AG04450 (cell line): ENCODE measurements at regions of chr14 and their contacts with region 1.

Region 1: GRCh38 chr14:22986508-22987054 is 4.2 kb upstream of the AJUBA start:
- DNase-seq: peak; percentile 75
- H3K4me3 ChIP-seq: no peak overlapping the region
- H3K27ac ChIP-seq: no peak overlapping the region
- H3K27me3 ChIP-seq: no peaks in the 10 kb centered on the region
- CTCF ChIP-seq: peak; percentile 90

Region 2: DNA sequence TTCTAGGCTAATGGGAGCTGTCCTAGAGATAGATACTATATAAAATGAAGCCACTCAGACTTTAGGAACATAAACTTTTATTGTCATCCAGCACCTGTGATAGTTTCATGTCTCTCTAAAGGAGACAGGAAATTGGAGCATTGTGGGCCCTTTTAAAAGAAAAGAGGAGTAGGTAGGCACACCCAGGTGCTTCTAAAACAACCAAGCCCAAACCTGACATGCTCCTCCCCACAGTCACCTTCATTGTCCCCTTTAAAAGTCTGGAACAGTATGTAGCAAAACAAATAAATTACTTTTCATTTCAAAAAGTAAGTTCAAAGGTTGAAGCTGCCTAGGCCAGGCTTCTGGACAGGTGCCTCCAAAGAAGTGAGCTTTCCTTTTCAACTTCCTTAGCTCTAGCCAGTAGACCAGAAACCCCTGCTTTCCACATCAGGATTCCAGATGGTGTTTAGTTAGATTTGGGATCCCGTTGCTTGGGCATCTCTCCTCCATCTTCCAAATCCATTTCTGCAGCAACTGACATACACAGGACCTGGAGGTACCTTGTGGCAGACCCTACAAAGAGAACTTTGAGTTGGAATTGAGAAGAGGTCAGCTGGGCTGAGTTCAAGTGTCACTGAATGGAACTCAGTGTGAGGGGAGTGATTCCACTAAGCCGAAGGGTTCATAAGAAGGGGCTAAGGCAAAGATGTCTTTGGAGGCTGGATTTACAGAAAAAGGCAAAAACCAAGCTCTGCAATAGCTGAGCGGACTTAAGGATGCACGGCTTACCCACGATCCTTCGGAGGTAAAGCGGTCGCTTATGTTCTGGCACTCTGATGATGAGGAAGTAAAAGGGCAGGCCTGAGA is 213.2 kb before region 1 on chr14:
- CTCF ChIA-PET with region 1: no interaction called
- POLR2A ChIA-PET with region 1: no interaction called
- DNase-seq: no peak
- H3K4me3 ChIP-seq: no peak overlapping the region
- H3K27ac ChIP-seq: no peak overlapping the region
- H3K27me3 ChIP-seq: no peaks in the 10 kb centered on the region
- CTCF ChIP-seq: no peak

Region 3: GRCh38 chr14:22929104-22929847 is 57.3 kb before region 1 on chr14 and contains the start of gene PRMT5:
- CTCF ChIA-PET with region 1: interaction called, 29 read pairs
- POLR2A ChIA-PET with region 1: interaction called, 10 read pairs
- DNase-seq: peak; percentile 99
- H3K4me3 ChIP-seq: peak within 1 kb of the TSS; percentile 100
- H3K27ac ChIP-seq: peak within 1 kb of the TSS; percentile 71
- H3K27me3 ChIP-seq: no peaks in the 10 kb centered on the region
- CTCF ChIP-seq: no peak
- polyA plus RNA-seq, gene PRMT5: 125 and 133 TPM in 2 replicates

Region 4: GRCh38 chr14:22962061-22962676 is 24.4 kb before region 1 on chr14:
- CTCF ChIA-PET with region 1: interaction called, 25 read pairs
- POLR2A ChIA-PET with region 1: interaction called, 3 read pairs
- DNase-seq: no peak
- H3K4me3 ChIP-seq: no peak overlapping the region
- H3K27ac ChIP-seq: no peak overlapping the region
- H3K27me3 ChIP-seq: no peaks in the 10 kb centered on the region
- CTCF ChIP-seq: no peak

Region 5: GRCh38 chr14:23006544-23007419 is 20.2 kb after region 1 on chr14:
- CTCF ChIA-PET with region 1: interaction called, 53 read pairs
- POLR2A ChIA-PET with region 1: interaction called, 9 read pairs
- DNase-seq: peak; percentile 95
- H3K4me3 ChIP-seq: peak overlapping the region; percentile 80
- H3K27ac ChIP-seq: peak overlapping the region; percentile 92
- H3K27me3 ChIP-seq: no peaks in the 10 kb centered on the region
- CTCF ChIP-seq: peak; percentile 40

Region 6: GRCh38 chr14:23034483-23035302 is 48.1 kb after region 1 on chr14 and contains the start of gene PSMB5:
- CTCF ChIA-PET with region 1: interaction called, 19 read pairs
- POLR2A ChIA-PET with region 1: no interaction called
- DNase-seq: peak; percentile 83
- H3K4me3 ChIP-seq: peak within 1 kb of the TSS; percentile 93
- H3K27ac ChIP-seq: peak within 1 kb of the TSS; percentile 94
- H3K27me3 ChIP-seq: no peaks in the 10 kb centered on the region
- CTCF ChIP-seq: no peak
- polyA plus RNA-seq, gene PSMB5: 282 and 292 TPM in 2 replicates

Region 7: GRCh38 chr14:23076785-23077408 is 90.3 kb after region 1 on chr14:
- CTCF ChIA-PET with region 1: interaction called, 31 read pairs
- POLR2A ChIA-PET with region 1: no interaction called
- DNase-seq: no peak
- H3K4me3 ChIP-seq: no peak overlapping the region
- H3K27ac ChIP-seq: no peak overlapping the region
- H3K27me3 ChIP-seq: no peaks in the 10 kb centered on the region
- CTCF ChIP-seq: peak; percentile 75

Region 8: GRCh38 chr14:23104591-23105347 is 118.2 kb after region 1 on chr14 and contains the start of gene CIROP:
- CTCF ChIA-PET with region 1: interaction called, 81 read pairs
- POLR2A ChIA-PET with region 1: no interaction called
- DNase-seq: no peak
- H3K4me3 ChIP-seq: peak within 1 kb of the TSS; percentile 1; the same call in 1 of the 2 replicates
- H3K27ac ChIP-seq: no peak within 1 kb of the TSS
- H3K27me3 ChIP-seq: no peaks in the 10 kb centered on the region
- CTCF ChIP-seq: no peak
- polyA plus RNA-seq, gene CIROP: 0.07 and 0.12 TPM in 2 replicates

Region 9: GRCh38 chr14:23335623-23336022 is 349.0 kb after region 1 on chr14:
- CTCF ChIA-PET with region 1: no interaction called
- POLR2A ChIA-PET with region 1: no interaction called
- DNase-seq: no peak
- H3K4me3 ChIP-seq: no peak overlapping the region
- H3K27ac ChIP-seq: no peak overlapping the region
- H3K27me3 ChIP-seq: peaks cover 2% of the 10 kb centered on the region
- CTCF ChIP-seq: no peak